ENCODE measurements at regions of chr10 and their contacts with region 1.

Region 1: GRCh38 chr10:102311025-102311420 is 65.7 kb downstream of the GBF1 start:
- DNase-seq: no peak
- ATAC-seq: no peak
- H3K4me3 ChIP-seq: no peak overlapping the region
- H3K27ac ChIP-seq: no peak overlapping the region
- H3K4me1 ChIP-seq: peaks cover 22% of the 10 kb centered on the region; the same call in 1 of the 2 replicates
- H3K27me3 ChIP-seq: no peaks in the 10 kb centered on the region
- CTCF ChIP-seq: no peak

Region 2: GRCh38 chr10:101797403-101798059 is 513.5 kb before region 1 on chr10:
- CTCF ChIA-PET with region 1: no interaction called
- POLR2A ChIA-PET with region 1: no interaction called
- intact Hi-C with region 1: no loop called
- DNase-seq: no peak
- ATAC-seq: no peak
- H3K4me3 ChIP-seq: no peak overlapping the region
- H3K27ac ChIP-seq: no peak overlapping the region
- H3K4me1 ChIP-seq: no peaks in the 10 kb centered on the region
- H3K27me3 ChIP-seq: no peaks in the 10 kb centered on the region
- CTCF ChIP-seq: no peak

Region 3: DNA sequence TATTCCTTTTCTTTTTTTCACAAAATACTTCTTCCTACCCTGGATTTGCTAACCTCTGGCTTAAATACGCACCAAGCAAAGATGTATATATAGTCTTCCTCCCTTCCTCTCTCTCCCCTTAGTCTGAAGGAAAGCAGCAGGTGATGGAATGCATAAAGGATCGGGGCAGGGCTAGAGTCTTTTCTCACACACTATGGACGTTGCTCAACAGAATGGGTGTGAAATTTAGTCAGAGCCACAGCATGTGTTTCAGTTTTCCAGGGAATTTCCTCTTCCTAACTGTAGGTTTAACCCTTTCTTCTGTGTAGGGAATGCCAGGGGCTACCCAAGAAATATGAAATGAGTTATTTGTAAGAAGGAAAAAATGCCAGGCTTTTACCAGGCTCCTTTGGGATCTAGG is 13.0 kb after region 1 on chr10:
- CTCF ChIA-PET with region 1: no interaction called
- POLR2A ChIA-PET with region 1: interaction called, 16 read pairs
- intact Hi-C with region 1: no loop called
- DNase-seq: no peak
- ATAC-seq: no peak
- H3K4me3 ChIP-seq: no peak overlapping the region
- H3K27ac ChIP-seq: no peak overlapping the region
- H3K4me1 ChIP-seq: no peaks in the 10 kb centered on the region
- H3K27me3 ChIP-seq: no peaks in the 10 kb centered on the region
- CTCF ChIP-seq: no peak

Measured in PC-3 (cell line).